ENCODE measurements at regions of chr1 and their contacts with region 1.

Region 1: GRCh38 chr1:206663832-206664652 is 20.7 kb upstream of the MAPKAPK2 start:
- DNase-seq: peak; percentile 87
- H3K4me3 Mint-ChIP-seq: peak overlapping the region; percentile 10
- H3K27ac Mint-ChIP-seq: no peak overlapping the region
- H3K4me1 Mint-ChIP-seq: peaks cover 38% of the 10 kb centered on the region
- H3K27me3 Mint-ChIP-seq: peaks cover 18% of the 10 kb centered on the region

Region 2: DNA sequence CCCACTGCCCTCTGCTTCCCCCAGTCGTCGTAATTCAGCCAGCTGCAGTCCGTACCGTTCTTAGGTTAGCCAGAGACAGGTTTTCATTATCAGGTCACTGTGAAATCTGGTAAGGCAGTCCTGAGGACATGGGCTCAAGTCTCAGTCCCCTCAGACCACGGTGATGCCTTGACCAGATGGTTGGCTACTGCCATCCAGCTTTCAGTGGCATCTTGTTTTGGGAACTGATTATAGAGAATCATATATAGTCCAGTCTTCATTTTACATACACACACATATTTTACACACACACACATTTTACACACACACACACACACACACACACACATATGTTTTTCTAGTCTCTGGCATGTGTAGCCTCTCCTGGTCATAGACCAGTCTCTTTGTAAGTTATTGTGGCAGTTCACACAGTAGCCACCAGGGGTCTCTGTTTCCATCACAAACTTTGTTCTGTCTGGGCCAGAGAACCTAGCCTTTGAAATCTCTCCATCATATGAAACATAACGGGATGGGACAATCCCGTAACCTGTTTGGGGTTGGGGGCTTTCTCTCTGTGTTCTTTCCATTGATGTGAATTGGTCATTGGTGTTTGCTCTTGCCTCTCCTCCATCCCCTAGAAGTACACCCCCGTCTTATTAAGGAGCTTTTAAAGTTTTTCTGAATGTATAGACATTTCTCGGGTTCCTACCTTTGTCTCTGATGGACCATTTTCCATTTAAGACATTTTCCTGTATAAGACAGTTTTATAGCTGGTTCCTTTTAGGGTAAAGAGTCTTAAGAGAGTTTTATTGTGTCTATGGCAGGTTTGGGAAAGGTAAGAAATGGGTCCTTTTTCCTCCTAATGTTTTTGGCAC is 202.2 kb before region 1 on chr1:
- CTCF ChIA-PET with region 1: interaction called, 23 read pairs
- intact Hi-C with region 1: loop called (anchors 1 kb)
- DNase-seq: peak; percentile 92
- H3K4me3 Mint-ChIP-seq: no peak overlapping the region
- H3K27ac Mint-ChIP-seq: no peak overlapping the region
- H3K4me1 Mint-ChIP-seq: peaks cover 46% of the 10 kb centered on the region
- H3K27me3 Mint-ChIP-seq: no peaks in the 10 kb centered on the region

Region 3: GRCh38 chr1:206489980-206490770 is 173.9 kb before region 1 on chr1:
- CTCF ChIA-PET with region 1: interaction called, 93 read pairs
- intact Hi-C with region 1: loop called (anchors 1 kb)
- DNase-seq: peak; percentile 87
- H3K4me3 Mint-ChIP-seq: no peak overlapping the region
- H3K27ac Mint-ChIP-seq: no peak overlapping the region
- H3K4me1 Mint-ChIP-seq: no peaks in the 10 kb centered on the region
- H3K27me3 Mint-ChIP-seq: no peaks in the 10 kb centered on the region

Region 4: GRCh38 chr1:206551986-206552326 is 112.1 kb before region 1 on chr1:
- CTCF ChIA-PET with region 1: interaction called, 50 read pairs
- intact Hi-C with region 1: no loop called
- DNase-seq: peak; percentile 93
- H3K4me3 Mint-ChIP-seq: peak overlapping the region; percentile 79
- H3K27ac Mint-ChIP-seq: peak overlapping the region; percentile 93
- H3K4me1 Mint-ChIP-seq: peaks cover 53% of the 10 kb centered on the region
- H3K27me3 Mint-ChIP-seq: no peaks in the 10 kb centered on the region

Region 5: DNA sequence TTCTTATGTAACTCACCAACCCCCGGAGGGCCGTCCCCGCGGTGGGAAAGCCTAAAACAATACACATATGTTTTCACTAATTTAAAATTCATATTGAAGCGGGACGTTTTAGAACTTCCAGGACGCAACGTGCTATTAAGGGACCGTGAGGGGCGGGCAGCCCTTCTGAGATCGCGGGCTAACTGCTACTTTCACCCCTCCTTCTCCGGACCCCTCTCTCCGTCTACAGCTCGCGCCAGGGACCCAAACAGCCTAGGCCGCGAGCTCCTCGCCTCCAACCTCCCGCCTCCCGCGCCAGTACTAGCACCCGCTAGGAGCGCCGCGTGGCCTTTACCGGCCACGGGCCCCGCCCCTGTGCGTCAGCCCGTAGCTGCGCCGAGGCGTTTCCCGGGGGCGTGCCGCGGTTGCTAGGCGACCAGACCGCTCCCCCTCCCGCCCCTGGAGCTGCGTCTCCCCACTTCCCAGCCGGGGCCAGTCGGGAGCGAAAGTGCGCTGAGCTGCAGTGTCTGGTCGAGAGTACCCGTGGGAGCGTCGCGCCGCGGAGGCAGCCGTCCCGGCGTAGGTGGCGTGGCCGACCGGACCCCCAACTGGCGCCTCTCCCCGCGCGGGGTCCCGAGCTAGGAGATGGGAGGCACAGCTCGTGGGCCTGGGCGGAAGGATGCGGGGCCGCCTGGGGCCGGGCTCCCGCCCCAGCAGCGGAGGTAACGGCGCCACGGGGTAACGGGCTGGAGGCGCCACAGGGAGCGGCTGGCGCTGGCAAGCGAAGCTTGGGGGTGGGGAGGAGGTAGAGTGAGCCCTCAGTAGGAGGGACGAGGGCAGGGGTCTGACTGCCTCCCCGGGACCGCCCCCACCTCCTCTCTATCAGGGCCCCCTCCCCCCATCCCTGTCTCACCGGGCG is 28.7 kb before region 1 on chr1 and contains the start of gene DYRK3:
- CTCF ChIA-PET with region 1: interaction called, 133 read pairs
- intact Hi-C with region 1: loop called (anchors 1 kb)
- DNase-seq: peak; percentile 93
- H3K4me3 Mint-ChIP-seq: peak within 1 kb of the TSS; percentile 83
- H3K27ac Mint-ChIP-seq: peak within 1 kb of the TSS; percentile 92
- H3K4me1 Mint-ChIP-seq: peaks cover 27% of the 10 kb centered on the region
- H3K27me3 Mint-ChIP-seq: peaks cover 21% of the 10 kb centered on the region
- total RNA-seq, gene DYRK3: 6.5 to 6.7 TPM

Region 6: DNA sequence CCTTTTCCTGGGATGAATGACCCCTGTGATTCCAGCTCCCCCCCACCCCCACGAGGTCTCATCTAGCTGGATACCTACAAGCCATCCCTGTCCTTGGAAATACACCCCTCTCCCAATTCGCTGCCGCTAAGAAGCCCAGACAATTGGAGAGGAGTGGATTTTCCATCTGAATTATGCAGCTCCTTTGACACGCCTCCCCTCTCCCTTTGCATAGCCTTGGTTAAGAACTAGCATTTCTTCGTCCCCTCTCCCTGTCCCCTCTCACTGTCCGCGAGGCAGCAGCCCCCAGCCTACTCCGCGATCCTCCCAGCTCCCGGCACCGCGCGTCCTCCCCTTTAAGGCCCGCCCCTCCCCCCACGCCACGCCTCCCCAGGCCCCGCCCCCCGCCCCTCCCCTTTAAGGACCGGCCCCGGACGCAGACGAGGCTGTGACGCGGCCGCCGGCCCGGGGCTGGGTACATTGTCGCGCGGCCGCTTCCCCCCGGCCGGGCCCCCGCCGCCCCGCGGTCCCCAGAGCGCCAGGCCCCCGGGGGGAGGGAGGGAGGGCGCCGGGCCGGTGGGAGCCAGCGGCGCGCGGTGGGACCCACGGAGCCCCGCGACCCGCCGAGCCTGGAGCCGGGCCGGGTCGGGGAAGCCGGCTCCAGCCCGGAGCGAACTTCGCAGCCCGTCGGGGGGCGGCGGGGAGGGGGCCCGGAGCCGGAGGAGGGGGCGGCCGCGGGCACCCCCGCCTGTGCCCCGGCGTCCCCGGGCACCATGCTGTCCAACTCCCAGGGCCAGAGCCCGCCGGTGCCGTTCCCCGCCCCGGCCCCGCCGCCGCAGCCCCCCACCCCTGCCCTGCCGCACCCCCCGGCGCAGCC is 20.7 kb after region 1 on chr1 and contains the start of gene MAPKAPK2:
- CTCF ChIA-PET with region 1: interaction called, 23 read pairs
- intact Hi-C with region 1: loop called (anchors 1 kb)
- DNase-seq: peak; percentile 75
- H3K4me3 Mint-ChIP-seq: peak within 1 kb of the TSS; percentile 88
- H3K27ac Mint-ChIP-seq: peak within 1 kb of the TSS; percentile 91
- H3K4me1 Mint-ChIP-seq: peaks cover 52% of the 10 kb centered on the region
- H3K27me3 Mint-ChIP-seq: peaks cover 2% of the 10 kb centered on the region
- total RNA-seq, gene MAPKAPK2: 83.4 to 85.3 TPM

Measured in activated naive CD4-positive, alpha-beta T cell treated with anti-CD3 and anti-CD28 coated beads for 36 hours (primary cell).